Activated CD8-positive, alpha-beta T cell treated with anti-CD3 and anti-CD28 coated beads for 36 hours (primary cell): ENCODE measurements at regions of chr5 and their contacts with region 1.

Region 1: DNA sequence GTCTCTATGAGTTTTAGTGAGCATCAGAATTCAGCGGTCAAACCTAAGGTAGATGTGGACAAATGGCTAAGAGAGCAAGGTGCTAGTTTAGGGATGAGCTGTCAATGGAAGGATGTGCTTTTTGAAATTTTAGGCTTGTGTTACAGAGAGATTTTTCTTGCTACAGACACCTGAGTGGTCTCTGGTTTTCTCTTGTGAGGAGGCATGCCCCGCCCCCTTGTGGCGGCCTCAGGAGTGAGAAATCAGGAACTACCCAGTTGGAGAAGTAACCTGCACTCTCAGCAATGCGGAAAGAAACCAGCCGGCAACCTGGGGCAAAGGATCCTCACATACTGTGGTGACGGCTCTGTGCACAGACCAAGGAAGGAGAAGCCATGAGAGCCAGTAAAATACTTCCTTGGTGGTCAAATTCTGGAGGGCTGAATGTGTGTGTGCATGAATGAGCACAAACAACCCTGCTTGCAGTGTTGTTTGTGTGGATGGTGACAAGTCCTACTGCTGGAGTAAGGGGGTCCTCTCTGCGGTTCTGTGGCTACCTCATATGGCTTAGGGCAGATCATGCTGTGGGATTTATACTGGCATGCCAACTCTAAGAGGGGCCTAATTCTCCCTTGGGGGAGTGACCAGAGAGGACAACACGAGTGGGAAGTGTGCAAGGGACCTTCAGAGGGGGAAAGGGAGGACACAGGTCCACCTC is 16.7 kb upstream of the HSD17B4 start:
- DNase-seq: peak; percentile 89
- ATAC-seq: peak; percentile 78
- H3K4me3 Mint-ChIP-seq: no peak overlapping the region
- H3K27ac Mint-ChIP-seq: no peak overlapping the region
- H3K4me1 Mint-ChIP-seq: peaks cover 19% of the 10 kb centered on the region
- H3K27me3 Mint-ChIP-seq: peaks cover 4% of the 10 kb centered on the region
- CTCF ChIP-seq: peak; percentile 73

Region 2: DNA sequence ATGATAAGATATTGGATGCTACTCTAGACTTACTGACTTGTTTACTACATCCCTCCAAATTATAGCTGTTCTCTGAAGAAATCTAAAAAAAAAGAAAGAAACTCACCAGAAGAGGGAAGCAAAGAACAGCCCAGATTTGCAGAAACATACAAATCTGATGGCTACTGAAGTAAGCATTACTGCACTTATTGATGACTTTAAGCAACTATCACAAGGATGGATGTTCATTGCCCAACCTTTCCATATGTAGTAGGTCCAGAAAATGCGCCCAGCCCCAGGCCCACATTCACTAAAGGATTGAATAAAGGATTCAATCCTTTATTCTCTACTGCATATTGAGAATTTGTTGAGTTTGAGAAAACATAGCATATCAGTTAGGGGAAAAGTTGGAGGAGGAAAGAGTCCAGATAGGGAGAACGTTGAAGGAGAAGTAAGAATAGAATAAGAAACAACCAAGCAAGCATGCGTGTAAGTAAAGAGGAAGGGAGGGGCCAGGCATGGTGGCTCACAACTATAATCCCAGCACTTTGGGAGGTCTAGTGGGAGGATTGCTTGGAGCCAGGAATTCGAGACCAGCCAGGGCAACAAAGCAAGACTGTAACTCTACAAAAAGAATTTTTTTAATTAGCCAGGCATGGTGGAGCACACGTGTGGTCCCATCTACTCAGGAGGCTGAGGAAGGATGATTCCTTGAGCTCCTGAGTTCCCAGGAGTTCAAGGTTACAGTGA is 413.4 kb before region 1 on chr5:
- CTCF ChIA-PET with region 1: interaction called, 12 read pairs
- POLR2A ChIA-PET with region 1: no interaction called
- intact Hi-C with region 1: no loop called
- DNase-seq: no peak
- ATAC-seq: peak; percentile 72
- H3K4me3 Mint-ChIP-seq: no peak overlapping the region
- H3K27ac Mint-ChIP-seq: no peak overlapping the region
- H3K4me1 Mint-ChIP-seq: peaks cover 8% of the 10 kb centered on the region
- H3K27me3 Mint-ChIP-seq: no peaks in the 10 kb centered on the region
- CTCF ChIP-seq: peak; percentile 56

Region 3: DNA sequence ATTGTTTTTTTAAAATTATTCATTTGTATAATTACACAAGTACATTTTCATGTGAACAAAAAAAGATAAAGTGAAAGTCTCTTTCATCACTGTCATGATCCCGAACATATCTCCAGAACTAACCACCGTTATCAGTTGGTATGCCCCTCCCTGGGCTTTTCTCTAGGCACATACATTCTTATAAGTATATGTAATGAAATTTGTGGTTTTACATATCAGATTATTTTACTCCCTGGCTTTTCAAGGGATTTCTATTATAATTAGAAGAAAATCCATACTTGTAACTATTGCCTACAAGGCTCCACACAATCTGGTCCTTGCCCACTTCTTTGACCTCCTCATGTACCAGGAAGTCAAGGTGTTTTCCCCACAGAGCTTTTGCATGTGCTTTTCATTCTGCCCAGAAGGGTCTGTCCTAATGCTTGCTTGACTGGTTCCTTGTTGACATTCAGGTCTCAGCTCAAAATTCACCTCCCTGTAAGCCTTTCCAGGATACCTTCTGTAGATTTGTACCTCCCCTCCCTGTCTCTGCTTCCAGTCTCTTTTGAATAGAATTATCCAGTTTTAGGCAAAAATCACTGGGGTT is 17.0 kb before region 1 on chr5:
- CTCF ChIA-PET with region 1: interaction called, 20 read pairs
- POLR2A ChIA-PET with region 1: interaction called, 3 read pairs
- intact Hi-C with region 1: no loop called
- DNase-seq: no peak
- ATAC-seq: peak; percentile 58
- H3K4me3 Mint-ChIP-seq: no peak overlapping the region
- H3K27ac Mint-ChIP-seq: no peak overlapping the region
- H3K4me1 Mint-ChIP-seq: peaks cover 20% of the 10 kb centered on the region
- H3K27me3 Mint-ChIP-seq: no peaks in the 10 kb centered on the region
- CTCF ChIP-seq: no peak

Region 4: GRCh38 chr5:119452373-119453039 is 16.9 kb after region 1 on chr5 and contains the start of gene HSD17B4:
- CTCF ChIA-PET with region 1: interaction called, 11 read pairs
- POLR2A ChIA-PET with region 1: no interaction called
- intact Hi-C with region 1: no loop called
- DNase-seq: peak; percentile 91
- ATAC-seq: peak; percentile 96
- H3K4me3 Mint-ChIP-seq: peak within 1 kb of the TSS; percentile 85
- H3K27ac Mint-ChIP-seq: peak within 1 kb of the TSS; percentile 83
- H3K4me1 Mint-ChIP-seq: peaks cover 21% of the 10 kb centered on the region
- H3K27me3 Mint-ChIP-seq: no peaks in the 10 kb centered on the region
- CTCF ChIP-seq: no peak
- total RNA-seq, gene HSD17B4: 94.3 to 111 TPM